Left ventricle myocardium superior (tissue), 1 donor: ENCODE measurements at regions of chr12 and their contacts with region 1.

Region 1: DNA sequence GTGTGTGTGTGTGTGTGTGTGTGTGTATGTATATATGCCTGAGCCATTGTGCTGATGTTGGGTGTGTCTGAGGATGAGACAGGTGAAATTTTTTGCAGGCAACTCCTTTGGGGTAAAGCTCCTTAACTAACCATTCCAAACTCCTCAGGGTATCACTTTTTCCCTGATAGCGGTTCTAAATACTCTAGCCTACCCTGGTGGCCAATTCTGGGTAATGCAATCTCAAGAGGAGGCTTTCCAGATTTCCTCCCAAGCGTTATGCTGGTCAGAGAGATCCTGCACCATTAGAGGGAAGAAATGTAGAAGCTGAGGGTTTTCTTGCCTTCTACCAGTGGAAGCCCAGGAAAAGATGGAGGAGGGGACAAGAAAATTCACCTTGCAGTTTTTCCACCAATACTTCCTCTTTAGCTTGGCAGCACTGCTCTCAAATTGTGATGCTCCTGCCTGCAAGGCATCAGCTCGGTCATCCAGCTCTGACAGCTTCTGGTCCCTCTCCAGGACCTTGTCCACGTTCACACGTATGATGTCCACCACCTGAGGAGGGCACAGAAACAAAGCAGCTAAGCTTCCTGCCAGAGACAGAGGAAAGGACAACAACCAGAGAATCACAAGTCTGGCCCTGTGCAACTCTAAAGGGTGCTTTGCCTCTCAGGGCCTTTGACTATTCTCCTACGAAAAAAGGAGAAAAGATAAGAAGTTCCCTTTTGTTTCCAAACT is 4.9 kb downstream of the VAMP1 start:
- DNase-seq: no peak
- ATAC-seq: peak; percentile 25

Region 2: DNA sequence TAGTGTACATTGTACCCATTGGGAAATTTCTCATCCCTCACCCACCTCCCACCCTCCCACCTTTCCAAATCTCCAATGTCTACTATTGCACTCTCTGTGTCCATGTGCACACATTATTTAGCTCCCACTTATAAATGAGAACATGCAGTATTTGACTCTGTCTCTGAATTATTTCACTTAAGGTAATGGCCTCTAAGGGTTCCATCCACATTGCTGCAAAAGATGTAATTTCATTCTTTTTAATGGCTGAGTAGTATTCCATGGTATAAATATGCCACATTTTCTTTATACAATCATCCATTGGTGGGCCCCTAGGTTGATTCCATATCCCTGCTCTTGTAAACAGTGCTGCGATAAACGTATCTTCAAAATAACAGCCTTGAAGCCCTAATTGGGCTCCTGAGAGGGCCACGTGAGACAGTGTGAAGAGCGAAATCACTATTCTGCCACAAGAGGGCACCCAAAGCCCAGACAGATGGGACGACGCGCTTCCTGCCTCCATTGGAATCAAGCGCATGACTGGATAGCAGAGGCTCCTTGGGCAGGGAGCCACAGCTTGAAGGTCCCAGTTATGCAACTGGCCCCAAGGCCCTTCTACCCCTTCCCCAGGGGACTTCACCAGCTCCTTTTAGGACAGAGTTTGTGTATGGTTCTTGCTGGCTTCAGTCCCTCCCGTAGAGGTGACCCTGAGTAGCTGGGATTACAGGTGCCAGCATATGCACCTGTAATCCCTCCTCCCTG is 42.2 kb before region 1 on chr12:
- intact Hi-C with region 1: loop called (anchors 5 kb)
- DNase-seq: peak; percentile 85
- ATAC-seq: peak; percentile 99